ENCODE measurements at regions of chr3 and their contacts with region 1.

Region 1: DNA sequence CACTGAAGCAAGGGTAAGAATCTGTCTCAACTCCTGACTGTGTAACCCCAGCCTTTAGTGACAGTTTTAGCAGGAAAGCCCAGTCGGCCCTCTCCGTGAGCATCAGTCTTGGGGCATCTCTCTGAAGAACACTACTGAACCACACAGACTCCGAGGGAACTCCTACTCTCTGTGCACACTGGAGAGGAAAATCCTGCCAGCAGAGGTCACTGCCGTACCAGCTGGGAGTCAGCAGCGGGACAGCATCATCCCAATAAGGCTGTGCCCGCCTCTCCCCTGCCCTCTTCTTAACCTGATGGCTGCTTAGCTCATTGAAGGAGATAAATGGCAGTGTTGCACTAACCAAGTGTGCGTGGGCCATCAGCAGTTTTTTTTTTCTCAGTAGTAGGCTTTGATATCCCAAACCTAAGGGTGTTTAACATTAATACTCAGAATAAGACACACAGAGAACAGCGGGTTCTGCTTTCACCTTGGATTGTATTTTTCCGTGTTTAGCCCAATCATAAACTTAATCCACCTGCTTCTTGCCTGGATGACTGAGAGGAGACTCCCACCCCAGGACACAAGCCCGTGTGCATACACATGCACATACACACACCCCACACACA is 26.6 kb upstream of the RASA2 start:
- DNase-seq: peak; percentile 72 to 88 (median 82)
- ATAC-seq: peak; percentile 100
- H3K4me3 ChIP-seq: no peak overlapping the region
- H3K4me3 Mint-ChIP-seq: no peak overlapping the region
- H3K27ac ChIP-seq: no peak overlapping the region
- H3K27ac Mint-ChIP-seq: peak overlapping the region in 1 of 9 donors; percentile 43
- H3K4me1 ChIP-seq: no peaks in the 10 kb centered on the region
- H3K4me1 Mint-ChIP-seq: peaks cover 0 to 20% (median 5%) of the 10 kb centered on the region in 7 donors
- H3K27me3 ChIP-seq: no peaks in the 10 kb centered on the region
- H3K27me3 Mint-ChIP-seq: peaks cover 0 to 2% (median 0%) of the 10 kb centered on the region in 5 donors

Region 2: GRCh38 chr3:141360888-141361598 is 99.2 kb before region 1 on chr3:
- CTCF ChIA-PET with region 1: interaction called, 66 read pairs
- POLR2A ChIA-PET with region 1: interaction called, 3 read pairs
- intact Hi-C with region 1: no loop called
- DNase-seq: peak in 7 of 9 donors; percentile 20 to 56 (median 45)
- ATAC-seq: peak; percentile 83
- H3K4me3 ChIP-seq: no peak overlapping the region
- H3K4me3 Mint-ChIP-seq: peak overlapping the region in 4 of 10 donors; percentile 16 to 40 (median 28)
- H3K27ac ChIP-seq: no peak overlapping the region
- H3K27ac Mint-ChIP-seq: peak overlapping the region in 2 of 9 donors; percentile 26 to 51
- H3K4me1 ChIP-seq: no peaks in the 10 kb centered on the region
- H3K4me1 Mint-ChIP-seq: peaks cover 5 to 9% (median 7%) of the 10 kb centered on the region in 7 donors
- H3K27me3 ChIP-seq: no peaks in the 10 kb centered on the region
- H3K27me3 Mint-ChIP-seq: peaks cover 0 to 11% (median 0%) of the 10 kb centered on the region in 5 donors

Region 3: GRCh38 chr3:141477224-141477623 is 17.0 kb after region 1 on chr3:
- CTCF ChIA-PET with region 1: interaction called, 20 read pairs
- POLR2A ChIA-PET with region 1: no interaction called
- intact Hi-C with region 1: loop called (anchors 1 kb)
- DNase-seq: no peak
- ATAC-seq: no peak
- H3K4me3 ChIP-seq: no peak overlapping the region
- H3K4me3 Mint-ChIP-seq: no peak overlapping the region
- H3K27ac ChIP-seq: no peak overlapping the region
- H3K27ac Mint-ChIP-seq: no peak overlapping the region
- H3K4me1 ChIP-seq: peaks cover 11% of the 10 kb centered on the region in 2 donors
- H3K4me1 Mint-ChIP-seq: peaks cover 24 to 46% (median 32%) of the 10 kb centered on the region in 7 donors
- H3K27me3 ChIP-seq: no peaks in the 10 kb centered on the region
- H3K27me3 Mint-ChIP-seq: peaks cover 0 to 21% (median 0%) of the 10 kb centered on the region in 5 donors

Region 4: DNA sequence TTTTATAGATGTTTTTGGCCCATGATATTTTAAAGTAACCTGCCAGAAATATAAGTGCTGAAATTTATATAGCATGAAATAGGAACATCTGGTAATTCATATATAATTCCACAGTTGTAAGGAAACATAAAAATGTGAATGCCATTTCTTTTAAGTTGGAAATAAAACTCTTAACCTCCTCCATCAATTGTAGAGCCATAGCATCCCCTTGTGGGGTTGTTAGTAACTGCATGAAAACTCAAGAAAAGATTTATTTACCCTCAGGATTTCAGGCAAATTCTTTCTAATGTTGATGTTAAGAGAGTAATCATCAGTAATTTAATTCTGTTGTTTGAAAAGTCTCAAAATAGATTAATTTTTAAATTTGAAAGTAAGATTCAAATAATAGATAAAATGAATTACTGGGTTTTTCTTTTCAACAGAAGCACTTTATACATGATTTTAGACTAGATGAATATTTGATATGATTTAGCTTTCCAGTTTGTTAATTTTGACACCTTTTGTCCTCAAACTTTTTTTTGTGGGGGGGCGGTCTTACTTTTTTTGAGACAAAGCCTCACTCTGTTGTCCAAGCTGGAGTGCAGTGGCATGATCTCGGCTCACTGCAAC is 101.3 kb after region 1 on chr3:
- CTCF ChIA-PET with region 1: interaction called, 134 read pairs
- POLR2A ChIA-PET with region 1: interaction called, 6 read pairs
- intact Hi-C with region 1: loop called (anchors 1 kb)
- DNase-seq: peak in 7 of 9 donors; percentile 59 to 78 (median 73)
- ATAC-seq: peak; percentile 80
- H3K4me3 ChIP-seq: no peak overlapping the region
- H3K4me3 Mint-ChIP-seq: peak overlapping the region in 4 of 10 donors; percentile 17 to 54 (median 32)
- H3K27ac ChIP-seq: peak overlapping the region; percentile 25
- H3K27ac Mint-ChIP-seq: peak overlapping the region in 8 of 9 donors; percentile 55 to 89 (median 76)
- H3K4me1 ChIP-seq: peaks cover 0 to 37% of the 10 kb centered on the region in 2 donors
- H3K4me1 Mint-ChIP-seq: peaks cover 11 to 47% (median 24%) of the 10 kb centered on the region in 7 donors
- H3K27me3 ChIP-seq: no peaks in the 10 kb centered on the region
- H3K27me3 Mint-ChIP-seq: no peaks in the 10 kb centered on the region

Region 5: DNA sequence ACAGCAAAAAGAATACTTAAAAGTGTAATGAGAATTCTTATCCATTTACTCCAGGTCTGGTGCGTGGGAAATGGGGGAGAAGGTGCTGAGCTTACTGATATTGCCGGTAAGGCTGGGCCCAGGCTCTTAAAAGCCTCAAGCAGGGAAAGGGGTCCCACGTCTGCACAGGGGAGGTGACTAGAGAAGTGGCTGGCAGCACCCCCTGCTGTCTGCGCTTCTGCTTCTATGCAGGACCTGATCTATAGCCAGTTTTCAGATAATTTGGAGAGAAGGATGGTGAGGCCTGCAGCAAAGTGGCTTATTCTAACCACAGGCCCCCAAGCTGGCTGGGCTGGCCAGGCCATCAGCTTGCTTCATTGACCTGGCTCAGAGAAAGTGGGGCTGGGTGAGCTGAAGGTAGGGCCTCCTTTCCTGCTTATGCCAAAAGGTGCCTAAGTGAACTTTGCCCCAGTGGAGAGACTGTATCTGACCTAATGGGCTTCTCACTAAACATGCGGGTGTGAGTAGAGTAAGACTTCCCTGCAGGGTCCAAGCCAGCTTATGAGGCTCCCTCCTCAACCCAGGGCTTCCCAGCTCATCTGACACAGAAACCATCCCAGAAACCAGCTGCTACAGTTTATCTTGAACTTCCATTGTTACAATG is 385.3 kb after region 1 on chr3:
- CTCF ChIA-PET with region 1: no interaction called
- POLR2A ChIA-PET with region 1: no interaction called
- intact Hi-C with region 1: loop called in 1 of 2 experiments (anchors 1 kb)
- DNase-seq: peak in 7 of 9 donors; percentile 10 to 46 (median 25)
- ATAC-seq: peak; percentile 55
- H3K4me3 ChIP-seq: no peak overlapping the region
- H3K4me3 Mint-ChIP-seq: no peak overlapping the region
- H3K27ac ChIP-seq: no peak overlapping the region
- H3K27ac Mint-ChIP-seq: peak overlapping the region in 2 of 9 donors; percentile 36 to 42
- H3K4me1 ChIP-seq: no peaks in the 10 kb centered on the region
- H3K4me1 Mint-ChIP-seq: peaks cover 4 to 18% (median 9%) of the 10 kb centered on the region in 7 donors
- H3K27me3 ChIP-seq: no peaks in the 10 kb centered on the region
- H3K27me3 Mint-ChIP-seq: peaks cover 0 to 6% (median 5%) of the 10 kb centered on the region in 5 donors

Region 6: DNA sequence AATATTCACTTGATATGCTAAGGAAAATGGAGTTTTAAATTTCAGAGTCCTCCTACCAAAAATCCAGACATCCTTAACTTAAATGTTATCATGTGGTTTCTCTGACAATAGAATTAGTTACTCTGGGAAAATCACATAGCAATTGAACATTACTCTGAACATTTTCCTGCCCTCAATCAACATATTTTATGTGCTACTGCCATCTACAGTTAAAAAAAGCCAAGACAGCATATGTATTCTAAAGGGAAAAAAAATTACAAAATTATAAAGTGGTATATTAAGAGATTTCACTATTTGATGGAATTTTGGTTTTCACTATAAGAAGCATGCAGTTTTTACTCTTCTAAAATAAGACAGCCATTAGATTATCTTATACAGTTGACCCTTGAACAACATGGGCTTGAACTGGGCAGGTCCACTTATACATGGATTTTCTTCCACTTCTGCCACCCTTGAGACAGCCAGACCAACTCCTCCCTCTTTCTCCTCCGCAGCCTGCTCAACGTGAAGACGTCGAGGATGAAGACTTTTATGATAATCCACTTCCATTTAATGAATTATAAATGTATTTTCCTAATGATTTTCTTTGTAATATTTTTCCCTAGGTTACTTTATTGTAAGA is 538.6 kb after region 1 on chr3:
- CTCF ChIA-PET with region 1: no interaction called
- POLR2A ChIA-PET with region 1: no interaction called
- intact Hi-C with region 1: loop called (anchors 1 to 5 kb)
- DNase-seq: peak in 3 of 9 donors; percentile 2 to 19 (median 10)
- ATAC-seq: no peak
- H3K4me3 ChIP-seq: no peak overlapping the region
- H3K4me3 Mint-ChIP-seq: no peak overlapping the region
- H3K27ac ChIP-seq: no peak overlapping the region
- H3K27ac Mint-ChIP-seq: no peak overlapping the region
- H3K4me1 ChIP-seq: no peaks in the 10 kb centered on the region
- H3K4me1 Mint-ChIP-seq: peaks cover 0 to 2% (median 0%) of the 10 kb centered on the region in 7 donors
- H3K27me3 ChIP-seq: no peaks in the 10 kb centered on the region
- H3K27me3 Mint-ChIP-seq: no peaks in the 10 kb centered on the region